BJ (cell line): ENCODE measurements at regions of chr5 and their contacts with region 1.

Region 1: GRCh38 chr5:157948738-157949410 is 89.9 kb upstream of the CLINT1 start:
- DNase-seq: peak; percentile 78
- H3K4me3 ChIP-seq: no peak overlapping the region
- H3K27me3 ChIP-seq: no peaks in the 10 kb centered on the region
- CTCF ChIP-seq: peak; percentile 94

Region 2: GRCh38 chr5:157858527-157859226 is 90.2 kb before region 1 on chr5 and contains the start of gene CLINT1:
- CTCF ChIA-PET with region 1: interaction called, 12 read pairs
- POLR2A ChIA-PET with region 1: no interaction called
- DNase-seq: no peak
- H3K4me3 ChIP-seq: peak within 1 kb of the TSS; percentile 86
- H3K27me3 ChIP-seq: no peaks in the 10 kb centered on the region
- CTCF ChIP-seq: no peak
- polyA plus RNA-seq, gene CLINT1: 93.2 and 164 TPM in 2 replicates

Region 3: GRCh38 chr5:157930710-157931109 is 18.2 kb before region 1 on chr5:
- CTCF ChIA-PET with region 1: interaction called, 15 read pairs
- POLR2A ChIA-PET with region 1: no interaction called
- DNase-seq: no peak
- H3K4me3 ChIP-seq: no peak overlapping the region
- H3K27me3 ChIP-seq: no peaks in the 10 kb centered on the region
- CTCF ChIP-seq: no peak

Region 4: DNA sequence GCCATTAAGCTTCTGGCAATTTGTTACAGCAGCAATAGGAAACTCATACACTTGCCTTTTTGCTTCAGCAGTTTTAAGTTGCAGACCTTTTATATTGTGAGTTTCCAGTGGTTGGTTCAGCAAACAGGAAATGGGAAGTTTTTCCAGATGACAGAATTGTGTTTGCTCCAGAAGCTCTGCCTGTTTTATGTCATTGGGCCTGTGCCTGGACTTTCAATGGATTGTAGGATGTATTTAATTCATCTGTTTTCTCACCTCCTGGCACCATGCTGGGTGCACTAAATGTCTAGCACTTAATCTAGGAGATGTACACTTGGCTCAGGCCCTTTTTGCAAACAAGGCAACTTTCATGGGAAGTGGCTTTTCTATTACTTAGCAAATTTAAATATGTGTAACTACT is 10.5 kb after region 1 on chr5:
- CTCF ChIA-PET with region 1: interaction called, 11 read pairs
- POLR2A ChIA-PET with region 1: no interaction called
- DNase-seq: no peak
- H3K4me3 ChIP-seq: no peak overlapping the region
- H3K27me3 ChIP-seq: no peaks in the 10 kb centered on the region
- CTCF ChIP-seq: no peak

Region 5: GRCh38 chr5:157976429-157976828 is 27.6 kb after region 1 on chr5:
- CTCF ChIA-PET with region 1: no interaction called
- POLR2A ChIA-PET with region 1: no interaction called
- DNase-seq: no peak
- H3K4me3 ChIP-seq: no peak overlapping the region
- H3K27me3 ChIP-seq: no peaks in the 10 kb centered on the region; the same call in 1 of the 2 replicates
- CTCF ChIP-seq: no peak